HCT116 (cell line): ENCODE measurements at regions of chr6 and their contacts with region 1.

Region 1: GRCh38 chr6:134063966-134064445 is 11.6 kb upstream of the SLC2A12 start:
- DNase-seq: peak; percentile 59
- ATAC-seq: peak; percentile 88
- H3K4me3 ChIP-seq: no peak overlapping the region
- H3K27ac ChIP-seq: no peak overlapping the region
- H3K4me1 ChIP-seq: peaks cover 5 to 22% of the 10 kb centered on the region in 2 experiments; a peak in 2 of 4 replicates
- H3K27me3 ChIP-seq: no peaks in the 10 kb centered on the region
- CTCF ChIP-seq: peak; percentile 87 to 97 (median 88)
- POLR2A ChIP-seq: no peak
- RAD21 ChIP-seq: peak; percentile 89

Region 2: DNA sequence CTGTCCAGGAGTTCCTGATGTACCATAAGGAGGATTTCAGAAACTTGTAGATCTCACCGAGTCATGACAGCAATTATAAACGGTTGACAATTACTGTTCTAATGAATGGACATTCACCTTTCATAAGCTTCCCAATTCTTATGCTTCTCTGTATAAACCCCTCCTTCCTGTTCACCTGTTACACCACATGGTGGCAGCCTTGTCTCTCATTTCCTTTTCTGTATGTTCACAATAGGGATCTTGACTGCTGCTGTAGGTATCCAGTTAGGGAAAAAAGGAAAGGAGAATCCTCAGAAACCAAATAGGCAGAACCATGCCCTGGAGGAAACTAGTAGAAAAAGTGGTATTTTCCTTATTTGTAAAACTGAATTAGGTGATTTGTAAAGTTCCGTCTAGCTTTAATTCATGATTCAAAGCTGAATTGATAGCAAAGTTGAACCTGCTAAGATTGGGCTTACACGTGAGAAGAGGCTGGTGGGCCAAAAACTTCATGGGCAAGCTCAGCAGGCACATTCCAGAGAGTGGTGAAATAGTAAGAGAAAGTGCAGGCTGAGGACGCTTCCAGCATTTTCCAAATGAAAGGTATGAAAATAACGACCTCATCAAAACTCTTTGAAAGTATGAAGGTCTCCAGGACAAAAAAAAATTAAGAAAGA is 139.9 kb before region 1 on chr6:
- CTCF ChIA-PET with region 1: interaction called, 27 read pairs
- POLR2A ChIA-PET with region 1: no interaction called
- RAD21 ChIA-PET with region 1: interaction called, 4 to 5 read pairs
- intact Hi-C with region 1: loop called (anchors 1 kb)
- DNase-seq: peak; percentile 78
- ATAC-seq: peak; percentile 92
- H3K4me3 ChIP-seq: no peak overlapping the region
- H3K27ac ChIP-seq: no peak overlapping the region
- H3K4me1 ChIP-seq: peaks cover 3 to 5% of the 10 kb centered on the region in 2 experiments; a peak in 1 of 4 replicates
- H3K27me3 ChIP-seq: no peaks in the 10 kb centered on the region
- CTCF ChIP-seq: peak; percentile 69 to 92 (median 88)
- POLR2A ChIP-seq: no peak
- RAD21 ChIP-seq: peak; percentile 98

Region 3: GRCh38 chr6:134074151-134075055 is 10.4 kb after region 1 on chr6:
- CTCF ChIA-PET with region 1: interaction called, 10 read pairs
- POLR2A ChIA-PET with region 1: no interaction called
- RAD21 ChIA-PET with region 1: no interaction called
- intact Hi-C with region 1: no loop called
- DNase-seq: no peak
- ATAC-seq: no peak
- H3K4me3 ChIP-seq: no peak overlapping the region
- H3K27ac ChIP-seq: no peak overlapping the region
- H3K4me1 ChIP-seq: peaks cover 0 to 6% of the 10 kb centered on the region in 2 experiments; a peak in 1 of 4 replicates
- H3K27me3 ChIP-seq: no peaks in the 10 kb centered on the region
- CTCF ChIP-seq: no peak
- POLR2A ChIP-seq: no peak
- RAD21 ChIP-seq: no peak

Region 4: GRCh38 chr6:134152767-134153485 is 88.9 kb after region 1 on chr6:
- CTCF ChIA-PET with region 1: no interaction called
- POLR2A ChIA-PET with region 1: no interaction called
- RAD21 ChIA-PET with region 1: no interaction called
- intact Hi-C with region 1: no loop called
- DNase-seq: no peak
- ATAC-seq: no peak
- H3K4me3 ChIP-seq: no peak overlapping the region
- H3K27ac ChIP-seq: no peak overlapping the region
- H3K4me1 ChIP-seq: no peaks in the 10 kb centered on the region
- H3K27me3 ChIP-seq: no peaks in the 10 kb centered on the region
- CTCF ChIP-seq: no peak
- POLR2A ChIP-seq: no peak
- RAD21 ChIP-seq: no peak